Body of pancreas (tissue), 4 donors: ENCODE measurements at regions of chr11 and their contacts with region 1.

Region 1: GRCh38 chr11:58675334-58676155 is 53.1 kb downstream of the CNTF start:
- DNase-seq: peak; percentile 86 to 91 (median 87)
- ATAC-seq: peak; percentile 90
- H3K4me3 ChIP-seq: no peak overlapping the region
- H3K27ac ChIP-seq: peak overlapping the region in 2 of 4 donors; percentile 19 to 71
- H3K4me1 ChIP-seq: peaks cover 27% of the 10 kb centered on the region
- H3K27me3 ChIP-seq: no peaks in the 10 kb centered on the region
- CTCF ChIP-seq: peak; percentile 83 to 94 (median 87)
- POLR2A ChIP-seq: no peak

Region 2: GRCh38 chr11:58316142-58316541 is 359.4 kb before region 1 on chr11:
- intact Hi-C with region 1: no loop called
- DNase-seq: no peak
- ATAC-seq: no peak
- H3K4me3 ChIP-seq: no peak overlapping the region
- H3K27ac ChIP-seq: no peak overlapping the region
- H3K4me1 ChIP-seq: no peaks in the 10 kb centered on the region
- H3K27me3 ChIP-seq: no peaks in the 10 kb centered on the region
- CTCF ChIP-seq: no peak
- POLR2A ChIP-seq: no peak

Region 3: GRCh38 chr11:58788355-58789023 is 112.9 kb after region 1 on chr11:
- intact Hi-C with region 1: loop called (anchors 10 kb)
- DNase-seq: peak; percentile 54 to 67 (median 61)
- ATAC-seq: peak; percentile 87
- H3K4me3 ChIP-seq: no peak overlapping the region
- H3K27ac ChIP-seq: no peak overlapping the region
- H3K4me1 ChIP-seq: peaks cover 21% of the 10 kb centered on the region
- H3K27me3 ChIP-seq: no peaks in the 10 kb centered on the region
- CTCF ChIP-seq: peak; percentile 39 to 82 (median 70)
- POLR2A ChIP-seq: no peak